ENCODE measurements at regions of chr2 and their contacts with region 1.

Region 1: GRCh38 chr2:12716282-12717190 is at the start of gene TRIB2:
- DNase-seq: peak; percentile 89
- H3K4me3 Mint-ChIP-seq: peak within 1 kb of the TSS; percentile 86
- H3K27ac Mint-ChIP-seq: peak within 1 kb of the TSS; percentile 86
- H3K4me1 Mint-ChIP-seq: peaks cover 44% of the 10 kb centered on the region
- H3K27me3 Mint-ChIP-seq: no peaks in the 10 kb centered on the region
- total RNA-seq, gene TRIB2: 4.9 to 5.3 TPM

Region 2: GRCh38 chr2:11863513-11864328 is 852.8 kb before region 1 on chr2:
- CTCF ChIA-PET with region 1: interaction called, 30 read pairs
- POLR2A ChIA-PET with region 1: no interaction called
- intact Hi-C with region 1: loop called (anchors 1 kb)
- DNase-seq: peak; percentile 76
- H3K4me3 Mint-ChIP-seq: peak overlapping the region; percentile 25
- H3K27ac Mint-ChIP-seq: no peak overlapping the region
- H3K4me1 Mint-ChIP-seq: peaks cover 41% of the 10 kb centered on the region
- H3K27me3 Mint-ChIP-seq: no peaks in the 10 kb centered on the region

Region 3: DNA sequence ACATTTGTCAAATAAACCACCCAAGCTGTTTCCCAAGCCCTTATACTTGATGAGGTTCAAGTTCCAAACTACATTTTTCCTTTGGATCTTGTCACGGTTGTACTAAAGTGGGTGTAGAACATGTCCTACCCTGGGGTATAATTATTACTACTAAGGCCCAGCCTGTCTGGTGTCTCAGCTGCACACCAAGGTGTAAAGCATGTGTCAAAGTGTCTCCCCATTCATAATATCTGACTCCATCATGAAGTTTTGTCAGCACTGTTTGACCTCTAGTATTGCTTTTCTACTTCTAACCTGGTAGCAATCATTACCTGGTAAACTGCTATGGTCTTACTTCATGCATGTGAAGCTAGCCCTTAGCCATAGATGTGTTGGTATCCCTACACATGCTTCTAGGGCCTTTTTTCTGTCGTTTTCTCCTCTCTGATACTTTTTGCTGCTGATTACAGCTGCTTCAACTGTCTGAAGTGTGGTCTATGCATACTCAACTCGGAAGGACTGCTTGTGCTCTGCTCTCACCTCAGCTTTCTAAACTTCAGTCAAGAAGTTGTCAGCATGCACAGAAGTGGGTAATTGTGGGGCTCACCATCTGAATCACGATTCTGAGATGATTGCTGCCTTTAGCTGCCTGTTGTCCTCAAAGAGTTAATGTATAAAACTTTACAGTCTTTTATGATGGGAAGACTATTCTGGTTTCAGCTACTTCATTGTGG is 445.5 kb before region 1 on chr2:
- CTCF ChIA-PET with region 1: interaction called, 4 read pairs
- POLR2A ChIA-PET with region 1: no interaction called
- intact Hi-C with region 1: loop called (anchors 5 kb)
- DNase-seq: peak; percentile 63
- H3K4me3 Mint-ChIP-seq: no peak overlapping the region
- H3K27ac Mint-ChIP-seq: no peak overlapping the region
- H3K4me1 Mint-ChIP-seq: peaks cover 12% of the 10 kb centered on the region
- H3K27me3 Mint-ChIP-seq: no peaks in the 10 kb centered on the region

Region 4: DNA sequence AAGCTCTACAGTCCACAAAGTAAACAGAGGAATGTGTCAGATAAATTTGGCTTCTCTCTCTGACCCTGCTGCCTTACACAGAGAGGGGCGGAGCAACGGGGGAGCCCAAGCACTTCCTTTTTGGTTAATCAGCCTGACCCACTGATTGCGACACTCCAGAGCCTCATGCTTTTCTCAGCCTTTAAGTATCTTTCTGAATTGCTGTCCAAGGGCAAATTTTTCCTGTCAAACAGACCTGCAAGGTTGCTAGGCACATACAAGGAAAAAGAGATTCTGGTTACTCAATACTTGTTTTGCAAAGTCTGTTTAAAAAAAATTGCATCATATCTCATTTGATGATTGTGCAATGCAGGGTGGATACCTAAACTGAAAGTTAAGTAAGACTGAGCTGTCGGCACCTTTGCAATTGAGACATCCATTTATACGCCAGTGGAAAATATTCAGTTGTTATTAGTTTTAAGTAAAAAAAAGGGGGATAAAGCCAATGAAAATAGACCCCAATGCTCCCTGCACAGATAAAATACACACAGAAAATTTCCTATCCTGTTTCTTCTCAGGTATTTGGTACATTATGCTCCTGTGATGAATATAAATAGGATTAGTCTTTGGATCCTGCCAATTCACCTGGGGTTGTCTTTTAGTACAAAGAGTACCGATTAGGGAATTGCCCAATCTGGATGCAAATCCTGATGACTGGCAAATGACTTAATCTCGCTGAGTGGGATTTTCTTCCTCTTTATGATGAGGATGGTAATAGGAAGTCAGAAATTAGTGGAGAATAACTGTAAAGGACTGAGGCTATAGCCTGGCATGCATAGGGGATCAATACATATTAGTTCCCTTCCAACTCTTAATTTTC is 260.0 kb before region 1 on chr2:
- CTCF ChIA-PET with region 1: interaction called, 12 read pairs
- POLR2A ChIA-PET with region 1: no interaction called
- intact Hi-C with region 1: no loop called
- DNase-seq: peak; percentile 79
- H3K4me3 Mint-ChIP-seq: peak overlapping the region; percentile 70
- H3K27ac Mint-ChIP-seq: peak overlapping the region; percentile 91
- H3K4me1 Mint-ChIP-seq: peaks cover 36% of the 10 kb centered on the region
- H3K27me3 Mint-ChIP-seq: no peaks in the 10 kb centered on the region

Region 5: DNA sequence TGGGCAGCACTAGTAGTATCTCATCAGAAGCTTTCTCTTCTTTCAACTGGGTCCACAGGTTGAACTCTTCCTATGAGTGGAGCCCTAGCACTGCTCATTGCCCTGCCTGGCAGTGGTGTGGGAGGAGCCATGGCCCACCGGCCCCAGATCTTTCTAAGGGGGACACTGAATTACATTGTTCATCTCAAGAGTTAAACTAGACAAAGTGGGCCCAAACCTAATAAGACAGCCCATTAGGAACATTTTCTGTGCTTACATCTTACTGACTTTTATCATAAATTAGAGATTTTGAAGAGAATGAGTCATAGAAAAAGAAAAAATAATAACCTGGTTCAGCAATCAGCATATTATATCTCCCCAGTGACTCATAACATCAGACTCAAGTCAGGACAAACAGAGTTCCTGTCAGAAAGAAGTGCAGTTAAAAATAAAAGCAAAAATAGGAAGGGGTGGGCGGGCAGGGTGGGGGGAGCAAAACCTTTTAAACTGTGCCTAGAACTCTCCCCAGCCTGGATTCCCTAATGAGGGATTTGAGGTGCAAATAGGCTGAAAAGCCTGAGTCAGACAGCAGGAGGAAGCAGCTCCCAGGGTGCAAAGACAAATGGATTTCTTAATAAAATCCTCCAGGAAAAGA is 161.4 kb before region 1 on chr2:
- CTCF ChIA-PET with region 1: interaction called, 14 read pairs
- POLR2A ChIA-PET with region 1: interaction called, 6 read pairs
- intact Hi-C with region 1: loop called (anchors 1 kb)
- DNase-seq: peak; percentile 52
- H3K4me3 Mint-ChIP-seq: peak overlapping the region; percentile 21
- H3K27ac Mint-ChIP-seq: peak overlapping the region; percentile 80
- H3K4me1 Mint-ChIP-seq: peaks cover 40% of the 10 kb centered on the region
- H3K27me3 Mint-ChIP-seq: no peaks in the 10 kb centered on the region

Region 6: GRCh38 chr2:12824778-12825379 is 108.3 kb after region 1 on chr2:
- CTCF ChIA-PET with region 1: no interaction called
- POLR2A ChIA-PET with region 1: no interaction called
- intact Hi-C with region 1: no loop called
- DNase-seq: no peak
- H3K4me3 Mint-ChIP-seq: no peak overlapping the region
- H3K27ac Mint-ChIP-seq: no peak overlapping the region
- H3K4me1 Mint-ChIP-seq: peaks cover 12% of the 10 kb centered on the region
- H3K27me3 Mint-ChIP-seq: no peaks in the 10 kb centered on the region

Region 7: DNA sequence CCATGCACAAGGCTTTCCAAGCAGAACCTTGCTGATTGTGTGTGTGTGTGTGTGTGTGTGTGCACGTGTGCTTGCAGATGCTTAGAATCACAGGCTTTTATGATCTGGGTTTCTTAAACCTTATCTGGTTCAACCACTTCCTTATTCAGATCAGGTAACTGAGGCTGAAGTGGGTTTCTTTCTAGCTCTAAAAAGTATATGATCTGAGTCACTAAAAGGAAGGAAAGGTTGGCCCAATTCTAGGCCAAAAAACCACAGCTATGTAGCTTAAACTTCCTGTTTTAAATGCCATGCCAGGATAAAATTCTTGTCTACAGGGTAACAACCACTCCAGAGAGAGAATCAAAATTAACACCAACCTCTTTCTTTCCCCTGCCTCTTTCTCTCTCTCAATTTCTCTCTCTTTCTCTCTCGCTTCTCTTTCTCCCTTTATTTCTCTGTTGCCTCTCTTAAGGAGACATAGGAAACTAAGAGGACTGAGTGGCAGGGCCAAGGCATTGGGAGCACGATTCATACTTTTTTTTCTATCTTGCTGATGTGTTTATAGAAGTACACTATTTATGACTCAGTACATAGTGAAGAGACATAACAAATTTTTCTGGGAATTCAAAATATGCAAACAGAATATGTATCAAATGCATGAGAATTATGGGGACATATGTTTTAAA is 140.5 kb after region 1 on chr2:
- CTCF ChIA-PET with region 1: interaction called, 3 read pairs
- POLR2A ChIA-PET with region 1: no interaction called
- intact Hi-C with region 1: loop called (anchors 2 kb)
- DNase-seq: peak; percentile 36
- H3K4me3 Mint-ChIP-seq: no peak overlapping the region
- H3K27ac Mint-ChIP-seq: no peak overlapping the region
- H3K4me1 Mint-ChIP-seq: peaks cover 19% of the 10 kb centered on the region
- H3K27me3 Mint-ChIP-seq: no peaks in the 10 kb centered on the region

Measured in activated CD4-positive, alpha-beta memory T cell treated with anti-CD3 and anti-CD28 coated beads for 36 hours (primary cell).